ENCODE measurements at regions of chr1 and their contacts with region 1.

Region 1: GRCh38 chr1:226121587-226122400 is 59.3 kb downstream of the H3-3A start:
- DNase-seq: peak; percentile 90
- H3K4me3 Mint-ChIP-seq: peak overlapping the region; percentile 82
- H3K27ac Mint-ChIP-seq: no peak overlapping the region
- H3K4me1 Mint-ChIP-seq: peaks cover 43% of the 10 kb centered on the region
- H3K27me3 Mint-ChIP-seq: peaks cover 9% of the 10 kb centered on the region
- CTCF ChIP-seq: peak; percentile 91

Region 2: DNA sequence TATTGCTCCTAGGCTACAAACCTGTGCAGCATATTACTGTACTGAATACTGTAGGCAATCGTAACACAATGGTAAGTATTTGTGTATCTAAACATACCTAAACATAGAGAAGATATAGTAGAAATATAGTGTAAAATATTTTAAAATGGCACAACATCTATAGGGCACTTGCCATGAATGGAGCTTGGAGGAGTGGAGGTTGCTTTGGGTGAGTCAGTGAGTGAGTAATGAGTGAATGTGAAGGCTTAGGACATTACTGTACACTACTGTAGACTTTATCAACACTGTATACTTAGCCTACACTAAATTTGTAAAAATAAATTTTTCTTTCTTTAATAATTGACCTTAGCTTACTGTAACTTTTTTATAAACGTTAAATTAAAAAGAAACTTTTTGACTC is 188.7 kb before region 1 on chr1:
- CTCF ChIA-PET with region 1: no interaction called
- intact Hi-C with region 1: no loop called
- DNase-seq: no peak
- H3K4me3 Mint-ChIP-seq: no peak overlapping the region
- H3K27ac Mint-ChIP-seq: no peak overlapping the region
- H3K4me1 Mint-ChIP-seq: no peaks in the 10 kb centered on the region
- H3K27me3 Mint-ChIP-seq: no peaks in the 10 kb centered on the region
- CTCF ChIP-seq: no peak

Region 3: GRCh38 chr1:225999227-225999911 is 122.4 kb before region 1 on chr1 and contains the start of gene SDE2:
- CTCF ChIA-PET with region 1: no interaction called
- intact Hi-C with region 1: loop called (anchors 5 kb)
- DNase-seq: peak; percentile 100
- H3K4me3 Mint-ChIP-seq: peak within 1 kb of the TSS; percentile 90
- H3K27ac Mint-ChIP-seq: peak within 1 kb of the TSS; percentile 91
- H3K4me1 Mint-ChIP-seq: peaks cover 51% of the 10 kb centered on the region
- H3K27me3 Mint-ChIP-seq: no peaks in the 10 kb centered on the region
- CTCF ChIP-seq: no peak
- total RNA-seq, gene SDE2: 26.2 and 28.1 TPM in 2 replicates

Region 4: GRCh38 chr1:226083302-226084101 is 38.3 kb before region 1 on chr1:
- CTCF ChIA-PET with region 1: interaction called, 7 read pairs
- intact Hi-C with region 1: loop called (anchors 5 kb)
- DNase-seq: peak; percentile 97
- H3K4me3 Mint-ChIP-seq: peak overlapping the region; percentile 81
- H3K27ac Mint-ChIP-seq: peak overlapping the region; percentile 58
- H3K4me1 Mint-ChIP-seq: peaks cover 6% of the 10 kb centered on the region
- H3K27me3 Mint-ChIP-seq: no peaks in the 10 kb centered on the region
- CTCF ChIP-seq: no peak

Region 5: GRCh38 chr1:226186124-226187018 is 64.6 kb after region 1 on chr1 and contains the start of gene ACBD3:
- CTCF ChIA-PET with region 1: interaction called, 9 read pairs
- intact Hi-C with region 1: loop called (anchors 1 kb)
- DNase-seq: peak; percentile 91
- H3K4me3 Mint-ChIP-seq: peak within 1 kb of the TSS; percentile 84
- H3K27ac Mint-ChIP-seq: peak within 1 kb of the TSS; percentile 70
- H3K4me1 Mint-ChIP-seq: peaks cover 31% of the 10 kb centered on the region
- H3K27me3 Mint-ChIP-seq: no peaks in the 10 kb centered on the region
- CTCF ChIP-seq: peak; percentile 24
- total RNA-seq, gene ACBD3: 50.3 and 51.6 TPM in 2 replicates

Region 6: DNA sequence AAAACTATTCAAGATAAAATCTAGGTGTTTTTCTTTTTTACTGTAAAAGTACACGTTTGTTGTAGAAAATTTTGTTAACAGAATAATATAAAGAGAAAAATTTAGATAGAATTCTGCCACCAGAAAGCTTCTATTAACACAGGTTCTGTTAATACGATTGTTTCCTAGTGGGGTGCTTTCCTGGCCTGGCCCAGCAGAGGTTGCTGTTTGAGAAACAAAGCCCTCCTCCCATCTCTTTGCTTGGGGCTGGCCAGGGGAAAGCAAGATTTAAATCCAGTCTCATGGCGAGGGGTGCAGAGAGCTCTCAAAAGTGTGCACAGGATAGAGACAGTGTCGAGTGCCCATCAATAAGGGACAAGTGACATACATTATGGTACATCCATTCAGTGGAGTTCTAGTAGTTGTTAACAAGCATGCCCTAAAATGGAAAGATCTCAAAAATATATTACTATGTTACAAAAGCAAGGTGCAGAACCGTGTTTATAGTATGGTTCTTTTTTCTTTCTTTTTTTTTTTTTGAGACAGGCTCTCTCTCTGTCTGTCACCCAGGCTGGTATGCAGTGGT is 79.3 kb after region 1 on chr1:
- CTCF ChIA-PET with region 1: interaction called, 50 read pairs
- intact Hi-C with region 1: loop called (anchors 1 kb)
- DNase-seq: peak; percentile 19
- H3K4me3 Mint-ChIP-seq: no peak overlapping the region
- H3K27ac Mint-ChIP-seq: no peak overlapping the region
- H3K4me1 Mint-ChIP-seq: no peaks in the 10 kb centered on the region
- H3K27me3 Mint-ChIP-seq: no peaks in the 10 kb centered on the region
- CTCF ChIP-seq: peak; percentile 9

Region 7: GRCh38 chr1:226332947-226333346 is 211.2 kb after region 1 on chr1:
- CTCF ChIA-PET with region 1: interaction called, 19 read pairs
- intact Hi-C with region 1: loop called (anchors 5 kb)
- DNase-seq: no peak
- H3K4me3 Mint-ChIP-seq: peak overlapping the region; percentile 58
- H3K27ac Mint-ChIP-seq: peak overlapping the region; percentile 68
- H3K4me1 Mint-ChIP-seq: peaks cover 10% of the 10 kb centered on the region
- H3K27me3 Mint-ChIP-seq: no peaks in the 10 kb centered on the region
- CTCF ChIP-seq: no peak

Measured in Calu3 (cell line).